ENCODE measurements at regions of chr14 and their contacts with region 1.

Region 1: DNA sequence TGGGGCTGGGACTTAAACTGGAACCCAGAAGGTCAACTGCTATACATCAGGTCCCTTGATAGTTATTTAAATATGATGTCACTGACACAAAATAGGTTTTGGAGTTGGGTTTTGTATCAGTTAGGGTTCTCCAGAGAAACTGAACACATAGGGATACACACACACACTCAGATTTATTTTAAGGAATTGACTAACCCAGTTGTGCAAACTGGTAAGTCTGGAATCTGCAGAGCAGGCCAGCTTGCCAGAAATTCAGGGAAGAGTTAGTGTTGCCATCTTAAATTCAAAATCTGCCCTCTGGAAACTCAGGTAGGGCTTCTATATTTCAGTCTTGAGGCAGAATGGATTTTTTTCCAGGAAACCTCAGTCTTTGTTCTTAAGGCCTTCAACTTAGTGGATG is 36.9 kb downstream of the MAPK1IP1L start:
- DNase-seq: no peak
- ATAC-seq: no peak
- H3K4me3 ChIP-seq: no peak overlapping the region
- H3K27ac ChIP-seq: no peak overlapping the region
- H3K4me1 ChIP-seq: no peaks in the 10 kb centered on the region
- H3K27me3 ChIP-seq: no peaks in the 10 kb centered on the region
- CTCF ChIP-seq: no peak
- POLR2A ChIP-seq: no peak
- RAD21 ChIP-seq: no peak

Region 2: GRCh38 chr14:54282849-54283248 is 805.5 kb before region 1 on chr14:
- CTCF ChIA-PET with region 1: no interaction called
- POLR2A ChIA-PET with region 1: no interaction called
- dilution Hi-C with region 1: no loop called
- in situ Hi-C with region 1: no loop called
- intact Hi-C with region 1: no loop called
- DNase-seq: no peak
- ATAC-seq: no peak
- H3K4me3 ChIP-seq: no peak overlapping the region
- H3K27ac ChIP-seq: no peak overlapping the region
- H3K4me1 ChIP-seq: no peaks in the 10 kb centered on the region
- H3K27me3 ChIP-seq: peaks cover 26% of the 10 kb centered on the region
- CTCF ChIP-seq: no peak
- POLR2A ChIP-seq: no peak
- RAD21 ChIP-seq: no peak

Region 3: GRCh38 chr14:55136885-55137786 is 48.8 kb after region 1 on chr14:
- CTCF ChIA-PET with region 1: interaction called, 7 read pairs
- POLR2A ChIA-PET with region 1: no interaction called
- dilution Hi-C with region 1: no loop called
- in situ Hi-C with region 1: no loop called
- intact Hi-C with region 1: loop called (anchors 2 kb)
- DNase-seq: peak; percentile 88
- ATAC-seq: peak; percentile 77
- H3K4me3 ChIP-seq: no peak overlapping the region
- H3K27ac ChIP-seq: peak overlapping the region; percentile 60; the same call in 1 of the 2 replicates
- H3K4me1 ChIP-seq: peaks cover 7% of the 10 kb centered on the region
- H3K27me3 ChIP-seq: no peaks in the 10 kb centered on the region
- CTCF ChIP-seq: peak; percentile 16; the same call in 1 of the 2 replicates
- POLR2A ChIP-seq: no peak
- RAD21 ChIP-seq: peak; percentile 46